WTC11 (cell line): ENCODE measurements at regions of chr5 and their contacts with region 1.

Region 1: DNA sequence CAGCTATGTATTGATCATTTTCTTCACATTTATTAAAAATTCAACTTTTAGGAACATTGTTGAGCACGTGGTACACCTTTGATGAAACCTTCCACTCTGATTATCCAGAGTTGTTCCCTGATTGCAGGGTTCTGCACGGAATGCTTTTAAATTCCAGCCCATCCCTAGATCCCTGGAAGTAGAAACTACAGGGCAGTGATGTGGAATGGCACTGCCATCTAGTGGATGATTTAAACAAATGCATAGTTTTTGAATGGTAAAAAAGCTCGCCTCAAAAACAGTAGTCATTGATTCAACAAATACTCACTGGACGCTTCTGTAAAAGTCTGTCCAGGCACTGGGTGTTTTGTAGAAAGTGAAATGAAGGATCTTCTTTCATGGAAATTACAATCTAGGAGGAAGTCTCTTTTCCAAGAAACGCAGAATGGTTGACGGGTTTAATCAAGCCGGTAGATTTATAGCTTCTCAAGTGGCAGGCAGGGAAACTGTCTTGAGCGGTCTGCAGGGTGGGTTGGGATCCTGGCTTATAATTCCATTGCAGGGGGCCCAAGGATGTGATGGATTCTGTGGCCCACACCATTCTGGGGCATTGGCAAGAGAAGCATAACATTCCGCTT is 118.4 kb downstream of the ARHGAP26 start:
- DNase-seq: no peak
- ATAC-seq: peak; percentile 79
- H3K4me3 Mint-ChIP-seq: no peak overlapping the region
- H3K27ac Mint-ChIP-seq: peak overlapping the region; percentile 55
- H3K4me1 Mint-ChIP-seq: peaks cover 37% of the 10 kb centered on the region
- H3K27me3 Mint-ChIP-seq: no peaks in the 10 kb centered on the region
- CTCF ChIP-seq: peak; percentile 70

Region 2: DNA sequence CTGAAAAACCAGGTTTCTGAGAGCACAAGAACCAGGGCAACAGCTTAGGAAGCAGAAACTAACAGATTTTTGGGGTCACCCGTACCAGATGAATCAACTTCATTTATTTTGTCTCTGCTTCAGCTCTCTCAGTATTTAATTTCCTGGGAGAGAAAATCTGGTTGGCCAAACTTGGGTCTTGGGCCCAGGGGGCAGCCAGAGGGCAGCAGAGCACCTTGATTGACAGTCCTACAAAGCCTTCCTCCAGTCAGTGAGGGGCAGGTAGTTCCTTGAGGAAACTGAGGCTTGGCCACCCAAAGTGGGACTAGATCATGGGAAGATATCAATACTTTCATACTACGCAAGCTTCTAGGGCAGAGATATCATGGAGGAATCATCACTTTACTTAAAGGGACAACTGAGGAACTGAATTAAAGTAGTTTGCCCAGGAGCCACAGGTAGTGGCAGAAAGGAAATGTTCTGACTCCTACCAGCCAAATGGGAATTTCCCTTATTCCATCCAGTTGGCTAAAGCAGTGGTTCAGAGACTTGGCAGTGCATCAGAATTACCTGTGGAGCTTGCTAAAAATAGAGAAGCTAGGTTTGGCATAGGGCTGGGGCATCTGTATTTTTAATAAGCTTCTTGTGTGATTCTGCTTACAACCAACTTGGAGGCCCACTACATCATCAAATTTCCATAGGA is 139.9 kb before region 1 on chr5:
- CTCF ChIA-PET with region 1: interaction called, 68 read pairs
- POLR2A ChIA-PET with region 1: no interaction called
- DNase-seq: peak; percentile 53
- ATAC-seq: peak; percentile 75
- H3K4me3 Mint-ChIP-seq: no peak overlapping the region
- H3K27ac Mint-ChIP-seq: no peak overlapping the region
- H3K4me1 Mint-ChIP-seq: peaks cover 7% of the 10 kb centered on the region
- H3K27me3 Mint-ChIP-seq: no peaks in the 10 kb centered on the region
- CTCF ChIP-seq: peak; percentile 51; the same call in 1 of the 2 replicates

Region 3: GRCh38 chr5:142862594-142862993 is 26.0 kb before region 1 on chr5:
- CTCF ChIA-PET with region 1: interaction called, 21 read pairs
- POLR2A ChIA-PET with region 1: no interaction called
- DNase-seq: no peak
- ATAC-seq: no peak
- H3K4me3 Mint-ChIP-seq: no peak overlapping the region
- H3K27ac Mint-ChIP-seq: peak overlapping the region; percentile 88
- H3K4me1 Mint-ChIP-seq: peaks cover 83% of the 10 kb centered on the region
- H3K27me3 Mint-ChIP-seq: no peaks in the 10 kb centered on the region
- CTCF ChIP-seq: no peak

Region 4: GRCh38 chr5:142900927-142901326 is 12.3 kb after region 1 on chr5:
- CTCF ChIA-PET with region 1: interaction called, 17 read pairs
- POLR2A ChIA-PET with region 1: no interaction called
- DNase-seq: no peak
- ATAC-seq: no peak
- H3K4me3 Mint-ChIP-seq: no peak overlapping the region
- H3K27ac Mint-ChIP-seq: peak overlapping the region; percentile 37
- H3K4me1 Mint-ChIP-seq: peaks cover 51% of the 10 kb centered on the region
- H3K27me3 Mint-ChIP-seq: no peaks in the 10 kb centered on the region
- CTCF ChIP-seq: no peak